ENCODE measurements at regions of chr16 and their contacts with region 1.

Region 1: GRCh38 chr16:67372664-67373063 is 20.6 kb downstream of the TPPP3 start:
- DNase-seq: peak in 1 of 2 donors; percentile 16
- ATAC-seq: no peak
- H3K4me3 ChIP-seq: no peak overlapping the region
- H3K27ac ChIP-seq: no peak overlapping the region
- H3K4me1 ChIP-seq: peaks cover 0 to 4% (median 0%) of the 10 kb centered on the region in 9 donors
- H3K27me3 ChIP-seq: peaks cover 0 to 14% (median under 1%) of the 10 kb centered on the region in 7 donors
- CTCF ChIP-seq: peak in 8 of 9 donors; percentile 22 to 68 (median 54)

Region 2: GRCh38 chr16:67091906-67092566 is 280.6 kb before region 1 on chr16:
- intact Hi-C with region 1: no loop called
- DNase-seq: no peak
- ATAC-seq: no peak
- H3K4me3 ChIP-seq: no peak overlapping the region
- H3K27ac ChIP-seq: no peak overlapping the region
- H3K4me1 ChIP-seq: no peaks in the 10 kb centered on the region
- H3K27me3 ChIP-seq: no peaks in the 10 kb centered on the region
- CTCF ChIP-seq: no peak

Region 3: GRCh38 chr16:67339453-67339852 is 33.2 kb before region 1 on chr16:
- intact Hi-C with region 1: no loop called
- DNase-seq: no peak
- ATAC-seq: no peak
- H3K4me3 ChIP-seq: no peak overlapping the region
- H3K27ac ChIP-seq: no peak overlapping the region
- H3K4me1 ChIP-seq: no peaks in the 10 kb centered on the region
- H3K27me3 ChIP-seq: no peaks in the 10 kb centered on the region
- CTCF ChIP-seq: peak in 4 of 9 donors; percentile 10 to 23 (median 16)

Region 4: GRCh38 chr16:67456391-67457081 is 83.9 kb after region 1 on chr16:
- intact Hi-C with region 1: loop called in 4 of 10 experiments (anchors 10 kb)
- DNase-seq: peak; percentile 56 to 67
- ATAC-seq: peak; percentile 18 to 73 (median 34)
- H3K4me3 ChIP-seq: no peak overlapping the region
- H3K27ac ChIP-seq: peak overlapping the region in 9 of 10 donors; percentile 39 to 87 (median 69)
- H3K4me1 ChIP-seq: peaks cover 45 to 75% (median 64%) of the 10 kb centered on the region in 9 donors
- H3K27me3 ChIP-seq: no peaks in the 10 kb centered on the region
- CTCF ChIP-seq: peak; percentile 20 to 63 (median 54)

Region 5: DNA sequence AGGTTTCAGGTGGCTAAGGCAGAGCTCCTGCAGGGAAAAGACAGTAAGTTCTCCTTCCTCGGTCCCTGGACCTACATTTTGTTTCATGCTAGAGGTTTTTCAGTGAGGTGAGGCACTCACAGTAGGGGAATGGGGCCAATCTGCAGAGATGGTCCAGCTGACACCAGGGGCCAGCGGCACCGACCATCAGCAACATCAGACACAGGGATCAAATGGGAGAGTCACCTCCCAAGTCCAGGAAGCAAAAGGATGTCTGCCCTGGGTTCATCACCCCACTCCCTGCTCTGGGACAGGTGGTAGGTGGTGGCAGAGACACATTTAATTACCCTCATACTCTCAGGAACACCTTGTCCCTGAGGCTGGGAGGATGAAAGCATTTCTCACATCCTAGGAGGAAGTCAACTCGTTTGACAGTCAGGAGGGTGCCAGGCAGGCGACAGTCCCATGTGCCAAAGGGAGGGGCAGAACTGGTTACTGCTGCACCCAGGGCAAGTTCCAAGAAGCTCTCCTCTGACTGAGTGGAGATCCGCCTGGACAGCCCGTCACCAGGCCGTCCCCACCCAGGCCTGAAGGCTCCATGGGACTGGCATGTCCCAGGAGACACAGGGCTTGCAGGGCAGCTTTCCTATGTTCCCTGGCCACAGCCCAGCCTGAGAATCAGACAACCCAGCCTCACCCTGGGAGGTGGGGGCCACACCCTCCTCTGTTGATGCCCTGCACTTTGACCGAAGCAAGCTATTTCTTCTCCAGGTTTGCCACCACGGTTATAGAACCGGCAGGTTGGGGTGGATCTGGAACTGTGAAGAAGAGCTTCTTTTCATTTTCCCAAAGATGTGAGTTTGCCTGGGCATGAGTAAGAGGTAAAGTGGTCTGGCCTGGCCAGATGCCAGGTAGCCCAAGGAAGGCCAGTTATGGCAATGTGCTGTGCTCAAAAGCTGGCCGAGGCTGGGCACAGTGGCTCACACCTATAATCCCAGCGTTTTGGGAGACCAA is 89.2 kb after region 1 on chr16:
- intact Hi-C with region 1: loop called in 7 of 10 experiments (anchors 2 to 10 kb)
- DNase-seq: no peak
- ATAC-seq: no peak
- H3K4me3 ChIP-seq: no peak overlapping the region
- H3K27ac ChIP-seq: no peak overlapping the region
- H3K4me1 ChIP-seq: peaks cover 48 to 90% (median 83%) of the 10 kb centered on the region in 9 donors
- H3K27me3 ChIP-seq: no peaks in the 10 kb centered on the region
- CTCF ChIP-seq: no peak

Region 6: GRCh38 chr16:67470359-67470758 is 97.7 kb after region 1 on chr16:
- intact Hi-C with region 1: loop called in 6 of 10 experiments (anchors 2 to 10 kb)
- DNase-seq: peak; percentile 89 to 90
- ATAC-seq: peak; percentile 81 to 95 (median 90)
- H3K4me3 ChIP-seq: no peak overlapping the region
- H3K27ac ChIP-seq: peak overlapping the region in 3 of 10 donors; percentile 17 to 43 (median 32)
- H3K4me1 ChIP-seq: peaks cover 13 to 68% (median 35%) of the 10 kb centered on the region in 9 donors
- H3K27me3 ChIP-seq: no peaks in the 10 kb centered on the region
- CTCF ChIP-seq: no peak